OCI-LY7 (cell line): ENCODE measurements at regions of chr2 and their contacts with region 1.

Region 1: GRCh38 chr2:207625018-207625907 is at the start of gene METTL21A:
- DNase-seq: peak; percentile 94
- H3K4me3 ChIP-seq: peak within 1 kb of the TSS; percentile 83
- H3K27ac ChIP-seq: peak within 1 kb of the TSS; percentile 99
- H3K4me1 ChIP-seq: peaks cover 64% of the 10 kb centered on the region
- CTCF ChIP-seq: peak; percentile 54
- total RNA-seq, gene METTL21A: 55.2 and 61.1 TPM in 2 replicates

Region 2: GRCh38 chr2:207115715-207116364 is 509.4 kb before region 1 on chr2:
- CTCF ChIA-PET with region 1: no interaction called
- POLR2A ChIA-PET with region 1: no interaction called
- intact Hi-C with region 1: no loop called
- DNase-seq: no peak
- H3K4me3 ChIP-seq: no peak overlapping the region
- H3K27ac ChIP-seq: no peak overlapping the region
- H3K4me1 ChIP-seq: no peaks in the 10 kb centered on the region
- CTCF ChIP-seq: no peak

Region 3: GRCh38 chr2:207662203-207662602 is 36.9 kb after region 1 on chr2:
- CTCF ChIA-PET with region 1: interaction called, 5 read pairs
- POLR2A ChIA-PET with region 1: interaction called, 9 read pairs
- intact Hi-C with region 1: loop called (anchors 1 kb)
- DNase-seq: peak; percentile 66
- H3K4me3 ChIP-seq: peak overlapping the region; percentile 18
- H3K27ac ChIP-seq: peak overlapping the region; percentile 38
- H3K4me1 ChIP-seq: peaks cover 60% of the 10 kb centered on the region
- CTCF ChIP-seq: no peak

Region 4: DNA sequence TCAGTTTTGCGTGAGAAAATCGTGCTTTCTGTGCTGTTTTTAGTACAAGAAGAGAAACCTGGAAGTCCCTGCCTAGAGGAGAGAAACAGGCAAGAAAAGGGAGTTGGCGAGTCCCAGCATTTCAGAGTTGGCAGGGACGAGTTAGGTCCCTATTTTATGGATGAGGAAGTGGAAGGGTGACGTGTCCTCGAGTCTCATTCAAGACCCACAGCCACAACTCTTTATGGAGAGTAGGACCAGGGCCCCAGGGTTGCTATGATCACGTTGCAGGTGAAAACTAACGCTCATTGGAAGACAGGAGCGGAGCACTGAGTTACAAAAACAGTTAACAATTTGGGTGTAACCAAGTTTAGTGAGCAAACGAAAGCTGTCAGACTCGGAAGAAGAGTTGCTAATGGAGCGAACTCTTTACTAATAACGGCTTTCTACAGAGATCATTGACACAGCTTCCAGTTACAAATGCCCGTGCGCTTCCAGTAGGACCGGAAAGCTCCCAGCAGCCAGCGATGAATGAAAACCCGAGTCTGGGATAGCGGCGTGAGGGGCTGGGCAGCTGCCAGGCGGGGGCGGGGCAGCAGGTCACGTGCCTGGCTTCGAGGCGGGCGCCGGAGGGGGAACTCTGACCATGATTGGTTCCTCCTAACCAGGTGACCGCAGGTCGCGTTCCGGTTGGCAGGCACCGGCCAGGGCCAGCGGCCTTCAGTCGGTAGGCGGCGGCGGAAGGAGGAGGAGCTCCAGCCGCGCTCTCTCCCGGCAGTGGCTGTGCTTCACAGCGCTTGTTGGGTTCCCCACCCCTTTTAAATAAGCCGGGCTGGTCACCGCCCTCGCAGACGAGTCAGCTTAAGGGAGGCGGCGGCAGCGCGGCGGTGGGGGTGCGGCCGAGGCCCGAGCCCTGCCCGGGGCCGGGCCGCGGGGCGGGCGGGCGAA is 85.8 kb after region 1 on chr2 and contains the start of gene CCNYL1:
- CTCF ChIA-PET with region 1: interaction called, 9 read pairs
- POLR2A ChIA-PET with region 1: interaction called, 20 read pairs
- intact Hi-C with region 1: loop called (anchors 1 kb)
- DNase-seq: peak; percentile 98
- H3K4me3 ChIP-seq: peak within 1 kb of the TSS; percentile 97
- H3K27ac ChIP-seq: peak within 1 kb of the TSS; percentile 57
- H3K4me1 ChIP-seq: peaks cover 22% of the 10 kb centered on the region
- CTCF ChIP-seq: no peak
- total RNA-seq, gene CCNYL1: 4.2 and 8.0 TPM in 2 replicates

Region 5: DNA sequence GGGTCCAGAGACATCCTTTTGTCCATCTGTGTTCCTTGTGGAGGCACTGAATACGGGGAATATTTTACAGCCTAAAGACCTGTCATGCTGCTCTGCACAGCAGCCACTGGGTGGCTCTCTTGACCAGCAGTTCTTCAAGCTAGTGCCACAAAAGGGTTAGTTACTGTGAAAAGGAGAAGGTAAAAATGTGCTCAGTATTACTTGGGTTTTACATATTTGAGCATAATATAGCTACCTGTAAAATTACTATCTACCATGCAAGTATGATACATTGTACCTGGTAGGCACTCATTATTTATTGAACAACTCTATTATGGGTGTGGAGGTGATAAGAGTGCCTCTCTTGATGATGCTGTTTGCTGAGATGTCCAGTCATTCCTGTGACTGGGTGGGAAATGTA is 120.9 kb after region 1 on chr2:
- CTCF ChIA-PET with region 1: no interaction called
- POLR2A ChIA-PET with region 1: no interaction called
- intact Hi-C with region 1: loop called (anchors 1 kb)
- DNase-seq: peak; percentile 75
- H3K4me3 ChIP-seq: no peak overlapping the region
- H3K27ac ChIP-seq: no peak overlapping the region
- H3K4me1 ChIP-seq: no peaks in the 10 kb centered on the region
- CTCF ChIP-seq: peak; percentile 98

Region 6: DNA sequence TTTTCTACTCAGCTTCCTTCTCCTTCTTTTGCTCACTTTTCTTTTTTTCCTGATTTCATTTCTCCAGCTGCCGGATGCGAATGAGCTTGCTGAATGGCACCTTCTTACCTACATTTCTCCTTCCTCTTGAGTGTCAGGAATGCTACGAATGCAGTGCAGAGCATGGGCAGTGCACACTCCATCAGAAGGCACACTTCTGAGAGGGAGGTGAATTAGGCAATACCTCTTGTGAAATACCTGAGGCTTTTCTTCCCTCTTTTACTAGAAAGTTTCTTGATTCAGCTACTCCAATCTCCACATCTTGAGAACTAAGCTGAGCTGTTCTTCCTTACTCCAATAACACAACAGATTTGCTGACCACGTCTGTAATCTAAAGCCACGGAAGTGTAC is 348.9 kb after region 1 on chr2:
- CTCF ChIA-PET with region 1: no interaction called
- POLR2A ChIA-PET with region 1: no interaction called
- intact Hi-C with region 1: loop called (anchors 2 kb)
- DNase-seq: no peak
- H3K4me3 ChIP-seq: no peak overlapping the region
- H3K27ac ChIP-seq: no peak overlapping the region
- H3K4me1 ChIP-seq: no peaks in the 10 kb centered on the region
- CTCF ChIP-seq: no peak

Region 7: DNA sequence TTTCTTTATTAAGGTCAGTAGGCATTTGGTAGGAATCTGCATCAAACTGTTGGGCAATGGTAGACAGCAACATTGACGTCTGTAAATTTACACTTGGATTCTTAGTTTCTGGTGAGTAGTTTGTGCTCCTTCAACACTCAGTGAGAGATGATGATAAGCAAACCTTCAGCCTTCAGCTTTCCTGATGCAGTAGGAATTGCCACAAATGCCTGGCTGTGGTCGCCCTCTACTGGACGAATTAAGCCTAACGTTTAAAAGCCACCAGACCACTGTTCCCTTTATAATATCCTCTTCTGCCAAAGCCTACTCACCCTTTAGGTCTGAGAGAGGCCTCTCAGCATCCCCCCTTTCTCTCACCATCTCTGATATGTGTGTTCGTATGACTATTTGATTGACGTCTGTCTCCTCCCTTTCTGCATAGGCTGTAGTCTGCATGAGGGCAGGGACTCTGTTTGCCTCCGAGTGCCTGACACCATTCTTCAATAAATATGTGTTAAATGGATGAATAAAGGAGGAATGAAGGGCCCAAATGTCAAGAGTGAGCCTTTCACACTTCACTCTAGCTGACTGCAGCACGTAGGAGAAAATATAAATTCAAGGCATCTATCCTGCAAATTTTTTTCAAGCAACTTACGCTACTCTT is 447.1 kb after region 1 on chr2:
- CTCF ChIA-PET with region 1: no interaction called
- POLR2A ChIA-PET with region 1: interaction called, 4 read pairs
- intact Hi-C with region 1: loop called (anchors 5 kb)
- DNase-seq: peak; percentile 58
- H3K4me3 ChIP-seq: no peak overlapping the region
- H3K27ac ChIP-seq: no peak overlapping the region
- H3K4me1 ChIP-seq: no peaks in the 10 kb centered on the region
- CTCF ChIP-seq: peak; percentile 87

Region 8: GRCh38 chr2:208671284-208671683 is 1046.0 kb after region 1 on chr2:
- CTCF ChIA-PET with region 1: no interaction called
- POLR2A ChIA-PET with region 1: no interaction called
- intact Hi-C with region 1: no loop called
- DNase-seq: no peak
- H3K4me3 ChIP-seq: no peak overlapping the region
- H3K27ac ChIP-seq: no peak overlapping the region
- H3K4me1 ChIP-seq: no peaks in the 10 kb centered on the region
- CTCF ChIP-seq: no peak